Posterior vena cava (tissue), 2 donors: ENCODE measurements at regions of chr1 and their contacts with region 1.

Region 1: DNA sequence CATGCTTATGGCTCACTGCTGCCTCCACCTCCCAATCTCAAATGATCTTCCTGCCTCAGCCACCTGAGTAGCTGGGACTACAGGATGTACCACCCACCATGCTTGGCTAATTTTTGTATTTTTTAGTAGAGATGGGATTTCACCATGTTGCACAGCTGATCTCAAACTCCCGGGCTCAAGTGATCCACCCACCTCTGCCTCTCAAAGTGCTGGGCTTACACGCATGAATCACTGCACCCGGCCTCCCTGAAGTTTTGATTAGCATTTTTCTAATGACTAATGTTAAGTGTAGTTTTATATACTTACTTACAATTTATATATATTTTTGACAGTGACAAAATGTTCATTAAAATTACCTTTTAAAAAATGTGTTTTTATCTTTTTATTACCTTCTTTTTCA is 41.1 kb downstream of the ZNF678 start:
- DNase-seq: no peak

Region 2: GRCh38 chr1:227828786-227829185 is 224.3 kb after region 1 on chr1:
- intact Hi-C with region 1: no loop called
- DNase-seq: no peak

Region 3: GRCh38 chr1:227884370-227885134 is 280.1 kb after region 1 on chr1:
- intact Hi-C with region 1: loop called in 1 of 2 experiments (anchors 5 kb)
- DNase-seq: peak; percentile 30

Region 4: DNA sequence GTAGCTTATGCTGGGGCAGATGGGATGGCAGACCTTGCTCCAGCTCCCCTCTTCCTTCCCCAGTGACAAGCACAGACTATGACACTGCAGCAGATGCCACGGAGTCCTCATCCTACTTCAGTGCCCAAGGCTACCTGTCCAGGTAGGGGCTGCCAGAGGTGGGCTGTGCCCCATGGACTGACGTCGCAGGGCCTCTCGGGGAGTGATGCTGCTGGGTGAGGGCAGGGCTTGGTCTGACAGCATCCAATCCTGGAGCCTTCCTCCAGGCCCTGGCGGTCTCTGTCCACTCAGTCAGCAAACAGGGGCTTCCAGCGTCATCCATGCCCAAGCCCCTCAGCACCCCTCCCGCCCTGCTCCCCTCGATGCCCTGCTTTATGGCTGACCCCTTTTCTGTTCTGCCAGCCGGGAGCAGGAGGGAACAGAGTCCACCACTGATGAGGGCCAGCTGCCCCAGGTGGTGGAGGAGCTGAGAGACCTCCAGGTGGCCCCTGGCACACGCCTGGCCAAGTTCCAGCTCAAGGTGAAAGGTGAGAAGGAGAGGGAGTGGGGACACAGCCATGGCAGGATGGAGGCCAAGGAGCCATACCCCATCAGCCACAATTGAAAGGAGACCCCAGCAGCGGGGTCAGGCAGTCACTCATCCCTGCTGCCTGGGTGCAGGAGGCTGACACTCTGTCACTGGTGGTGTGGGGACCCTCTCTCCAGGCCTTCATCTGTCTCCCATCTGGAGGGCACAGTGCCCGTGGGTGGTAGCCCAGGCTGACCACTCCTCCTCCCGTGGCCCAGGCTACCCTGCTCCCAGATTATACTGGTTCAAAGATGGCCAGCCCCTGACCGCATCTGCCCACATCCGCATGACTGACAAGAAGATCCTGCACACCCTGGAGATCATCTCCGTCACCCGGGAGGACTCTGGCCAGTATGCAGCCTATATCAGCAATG is 728.6 kb after region 1 on chr1:
- intact Hi-C with region 1: no loop called
- DNase-seq: peak; percentile 69